Activated CD4-positive, alpha-beta T cell treated with anti-CD3 and anti-CD28 coated beads, Interleukin-2, amount 10 ng/mL, durations not matched to agents 24 days and 14 days (primary cell): ENCODE measurements at regions of chr16 and their contacts with region 1.

Region 1: GRCh38 chr16:23869052-23869451 is 33.3 kb downstream of the PRKCB start:
- DNase-seq: peak; percentile 76
- H3K4me3 Mint-ChIP-seq: peak overlapping the region; percentile 3
- H3K27ac Mint-ChIP-seq: peak overlapping the region; percentile 36
- H3K4me1 Mint-ChIP-seq: peaks cover 47% of the 10 kb centered on the region
- H3K27me3 Mint-ChIP-seq: no peaks in the 10 kb centered on the region

Region 2: GRCh38 chr16:23556881-23557778 is 311.9 kb before region 1 on chr16 and contains the starts of genes EARS2 and UBFD1:
- intact Hi-C with region 1: no loop called
- DNase-seq: peak; percentile 99
- H3K4me3 Mint-ChIP-seq: peak within 1 kb of the TSS; percentile 98
- H3K27ac Mint-ChIP-seq: peak within 1 kb of the TSS; percentile 96
- H3K4me1 Mint-ChIP-seq: peaks cover 34% of the 10 kb centered on the region
- H3K27me3 Mint-ChIP-seq: no peaks in the 10 kb centered on the region
- total RNA-seq, gene EARS2: 29.7 and 31.4 TPM in 2 replicates
- total RNA-seq, gene UBFD1: 62.0 and 70.6 TPM in 2 replicates

Region 3: GRCh38 chr16:23678430-23679273 is 190.4 kb before region 1 on chr16 and contains the start of gene PLK1:
- intact Hi-C with region 1: no loop called
- DNase-seq: peak; percentile 96
- H3K4me3 Mint-ChIP-seq: peak within 1 kb of the TSS; percentile 92
- H3K27ac Mint-ChIP-seq: peak within 1 kb of the TSS; percentile 85
- H3K4me1 Mint-ChIP-seq: peaks cover 36% of the 10 kb centered on the region
- H3K27me3 Mint-ChIP-seq: no peaks in the 10 kb centered on the region
- total RNA-seq, gene PLK1: 45.7 and 51.7 TPM in 2 replicates

Region 4: GRCh38 chr16:23826528-23827045 is 42.5 kb before region 1 on chr16:
- intact Hi-C with region 1: loop called (anchors 2 kb)
- DNase-seq: peak; percentile 77
- H3K4me3 Mint-ChIP-seq: peak overlapping the region; percentile 41
- H3K27ac Mint-ChIP-seq: peak overlapping the region; percentile 52
- H3K4me1 Mint-ChIP-seq: peaks cover 26% of the 10 kb centered on the region
- H3K27me3 Mint-ChIP-seq: no peaks in the 10 kb centered on the region

Region 5: GRCh38 chr16:24010440-24011089 is 141.5 kb after region 1 on chr16:
- intact Hi-C with region 1: loop called (anchors 5 kb)
- DNase-seq: peak; percentile 93
- H3K4me3 Mint-ChIP-seq: no peak overlapping the region
- H3K27ac Mint-ChIP-seq: no peak overlapping the region
- H3K4me1 Mint-ChIP-seq: peaks cover 54% of the 10 kb centered on the region
- H3K27me3 Mint-ChIP-seq: no peaks in the 10 kb centered on the region